ENCODE measurements at regions of chr15 and their contacts with region 1.

Region 1: DNA sequence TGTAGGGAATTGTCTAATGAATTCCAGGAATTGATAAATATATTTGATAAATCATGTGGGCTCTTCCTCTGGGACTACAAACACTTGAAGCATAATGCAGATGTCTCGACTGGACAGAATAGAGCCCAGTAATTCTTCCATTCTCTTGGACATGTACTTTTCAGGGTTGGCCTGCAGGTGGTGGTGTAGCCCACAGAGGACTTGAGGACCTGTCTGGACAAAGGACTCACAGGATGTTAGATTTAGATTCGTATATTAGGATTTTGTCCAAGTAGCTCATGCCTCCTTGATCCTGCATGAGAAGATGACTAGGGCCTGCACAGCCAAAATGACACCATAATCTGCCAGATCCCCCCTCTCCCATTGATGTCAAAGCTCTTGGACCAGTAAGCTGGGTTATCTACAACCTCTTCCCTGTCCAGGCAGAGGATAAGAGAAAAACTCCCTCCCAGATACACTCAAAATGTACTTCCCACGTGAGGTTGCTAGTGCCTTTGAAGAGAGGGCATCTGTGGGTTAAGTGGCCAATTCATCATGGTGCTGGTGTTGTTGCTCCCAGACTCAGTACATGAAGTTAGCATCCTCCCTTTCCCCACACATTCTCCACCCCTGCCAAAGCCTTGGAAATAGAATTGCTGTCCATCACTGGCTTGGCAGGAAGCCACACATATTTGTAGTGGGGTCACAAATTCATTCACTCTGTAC is 88.6 kb upstream of the ZNF280D start:
- DNase-seq: peak; percentile 74
- H3K4me3 Mint-ChIP-seq: no peak overlapping the region
- H3K27ac Mint-ChIP-seq: no peak overlapping the region
- H3K4me1 Mint-ChIP-seq: peaks cover 14% of the 10 kb centered on the region
- H3K27me3 Mint-ChIP-seq: no peaks in the 10 kb centered on the region
- CTCF ChIP-seq: peak; percentile 72

Region 2: GRCh38 chr15:56832125-56832524 is 10.3 kb after region 1 on chr15:
- CTCF ChIA-PET with region 1: interaction called, 10 read pairs
- POLR2A ChIA-PET with region 1: interaction called, 8 read pairs
- intact Hi-C with region 1: no loop called
- DNase-seq: peak; percentile 72
- H3K4me3 Mint-ChIP-seq: no peak overlapping the region
- H3K27ac Mint-ChIP-seq: peak overlapping the region; percentile 14
- H3K4me1 Mint-ChIP-seq: peaks cover 7% of the 10 kb centered on the region
- H3K27me3 Mint-ChIP-seq: no peaks in the 10 kb centered on the region
- CTCF ChIP-seq: no peak

Region 3: GRCh38 chr15:57138349-57138788 is 316.5 kb after region 1 on chr15:
- CTCF ChIA-PET with region 1: interaction called, 6 read pairs
- POLR2A ChIA-PET with region 1: no interaction called
- intact Hi-C with region 1: loop called (anchors 1 kb)
- DNase-seq: peak; percentile 65
- H3K4me3 Mint-ChIP-seq: no peak overlapping the region
- H3K27ac Mint-ChIP-seq: no peak overlapping the region
- H3K4me1 Mint-ChIP-seq: no peaks in the 10 kb centered on the region
- H3K27me3 Mint-ChIP-seq: no peaks in the 10 kb centered on the region
- CTCF ChIP-seq: peak; percentile 66

Region 4: GRCh38 chr15:57213862-57214261 is 392.0 kb after region 1 on chr15:
- CTCF ChIA-PET with region 1: interaction called, 11 read pairs
- POLR2A ChIA-PET with region 1: interaction called, 3 read pairs
- intact Hi-C with region 1: loop called (anchors 1 kb)
- DNase-seq: peak; percentile 46
- H3K4me3 Mint-ChIP-seq: no peak overlapping the region
- H3K27ac Mint-ChIP-seq: no peak overlapping the region
- H3K4me1 Mint-ChIP-seq: peaks cover 11% of the 10 kb centered on the region
- H3K27me3 Mint-ChIP-seq: no peaks in the 10 kb centered on the region
- CTCF ChIP-seq: peak; percentile 37

Region 5: DNA sequence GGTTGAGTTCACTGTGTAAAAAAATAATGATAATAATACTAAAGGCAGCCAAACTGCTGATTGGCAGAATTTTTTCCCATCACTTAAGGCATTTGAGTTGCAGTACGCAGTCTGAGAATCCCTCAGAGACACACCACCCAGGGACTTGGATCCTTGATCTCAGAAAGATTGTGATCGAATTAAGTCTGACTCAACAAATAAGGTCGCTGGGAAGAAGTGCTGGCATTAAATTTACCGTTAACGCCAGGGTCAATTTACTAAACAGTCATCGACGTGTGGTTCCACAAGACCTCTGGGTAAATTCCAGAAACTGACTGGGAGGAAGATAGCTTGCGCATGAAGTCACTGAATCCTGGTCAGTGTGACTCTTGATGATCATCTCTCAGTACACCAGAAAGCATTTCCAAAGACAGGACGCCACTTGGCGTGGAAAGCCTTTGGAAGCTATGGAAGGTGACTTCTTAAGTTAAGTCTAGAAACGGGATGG is 506.2 kb after region 1 on chr15:
- CTCF ChIA-PET with region 1: no interaction called
- POLR2A ChIA-PET with region 1: no interaction called
- intact Hi-C with region 1: no loop called
- DNase-seq: no peak
- H3K4me3 Mint-ChIP-seq: no peak overlapping the region
- H3K27ac Mint-ChIP-seq: no peak overlapping the region
- H3K4me1 Mint-ChIP-seq: peaks cover 4% of the 10 kb centered on the region
- H3K27me3 Mint-ChIP-seq: peaks cover 24% of the 10 kb centered on the region
- CTCF ChIP-seq: no peak